ENCODE measurements at regions of chr11 and their contacts with region 1.

Region 1: DNA sequence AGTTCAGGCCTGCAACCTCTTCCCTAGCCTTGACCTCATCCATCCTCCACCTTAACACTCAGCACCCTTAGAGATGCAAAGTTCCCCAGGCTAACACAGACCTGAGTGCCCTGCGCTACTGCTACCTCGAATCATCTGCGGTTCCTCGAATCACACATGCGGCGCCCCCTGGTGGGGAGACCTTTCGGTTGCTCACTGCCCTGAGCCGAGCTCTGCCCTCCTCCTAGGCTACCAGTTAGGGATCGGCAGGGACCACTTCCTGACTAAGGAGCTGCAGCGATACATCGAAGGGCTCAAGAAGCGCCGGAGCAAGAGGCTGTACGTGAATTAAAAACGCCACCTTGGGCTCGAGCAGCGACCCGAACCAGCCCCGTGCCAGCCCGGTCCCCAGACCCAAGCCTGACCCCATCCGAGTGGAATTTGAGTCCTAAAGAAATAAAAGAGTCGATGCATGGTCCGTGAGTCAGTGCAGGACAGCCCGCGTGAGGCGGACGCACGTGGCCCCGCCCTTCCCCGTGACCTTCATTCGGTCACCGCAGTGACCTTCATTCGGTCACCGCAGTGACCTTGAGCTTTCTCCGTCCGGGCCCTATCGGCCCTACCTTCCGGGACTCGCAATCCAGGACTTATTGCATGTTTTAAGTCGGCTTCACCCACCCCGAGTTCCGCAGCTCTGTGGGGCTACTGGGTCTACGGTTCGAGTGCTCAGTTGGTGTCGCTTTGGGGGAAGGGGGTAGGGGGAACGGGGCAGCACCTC is 830 bp upstream of the ESRRA start:
- DNase-seq: peak; percentile 88
- H3K4me3 ChIP-seq: peak overlapping the region; percentile 67 to 82
- H3K27ac ChIP-seq: peak overlapping the region; percentile 83 to 96
- H3K4me1 ChIP-seq: peaks cover 5 to 18% of the 10 kb centered on the region in 2 experiments; a peak in 2 of 4 replicates
- H3K27me3 ChIP-seq: no peaks in the 10 kb centered on the region
- CTCF ChIP-seq: peak; percentile 96
- EP300 ChIP-seq: no peak
- RAD21 ChIP-seq: peak; percentile 64

Region 2: GRCh38 chr11:64225612-64226506 is 78.6 kb before region 1 on chr11 and contains the starts of genes NUDT22 and TRPT1:
- CTCF ChIA-PET with region 1: interaction called, 11 read pairs
- POLR2A ChIA-PET with region 1: no interaction called
- DNase-seq: peak; percentile 97
- H3K4me3 ChIP-seq: peak within 1 kb of the TSS; percentile 88 to 97
- H3K27ac ChIP-seq: peak within 1 kb of the TSS; percentile 47 to 88
- H3K4me1 ChIP-seq: peaks cover 9 to 34% of the 10 kb centered on the region in 2 experiments; a peak in 2 of 4 replicates
- H3K27me3 ChIP-seq: no peaks in the 10 kb centered on the region
- CTCF ChIP-seq: peak; percentile 16
- EP300 ChIP-seq: no peak
- RAD21 ChIP-seq: no peak
- polyA plus RNA-seq, gene NUDT22: 72.7 and 74.0 TPM in 2 replicates
- polyA plus RNA-seq, gene TRPT1: 61.5 and 62.4 TPM in 2 replicates

Region 3: DNA sequence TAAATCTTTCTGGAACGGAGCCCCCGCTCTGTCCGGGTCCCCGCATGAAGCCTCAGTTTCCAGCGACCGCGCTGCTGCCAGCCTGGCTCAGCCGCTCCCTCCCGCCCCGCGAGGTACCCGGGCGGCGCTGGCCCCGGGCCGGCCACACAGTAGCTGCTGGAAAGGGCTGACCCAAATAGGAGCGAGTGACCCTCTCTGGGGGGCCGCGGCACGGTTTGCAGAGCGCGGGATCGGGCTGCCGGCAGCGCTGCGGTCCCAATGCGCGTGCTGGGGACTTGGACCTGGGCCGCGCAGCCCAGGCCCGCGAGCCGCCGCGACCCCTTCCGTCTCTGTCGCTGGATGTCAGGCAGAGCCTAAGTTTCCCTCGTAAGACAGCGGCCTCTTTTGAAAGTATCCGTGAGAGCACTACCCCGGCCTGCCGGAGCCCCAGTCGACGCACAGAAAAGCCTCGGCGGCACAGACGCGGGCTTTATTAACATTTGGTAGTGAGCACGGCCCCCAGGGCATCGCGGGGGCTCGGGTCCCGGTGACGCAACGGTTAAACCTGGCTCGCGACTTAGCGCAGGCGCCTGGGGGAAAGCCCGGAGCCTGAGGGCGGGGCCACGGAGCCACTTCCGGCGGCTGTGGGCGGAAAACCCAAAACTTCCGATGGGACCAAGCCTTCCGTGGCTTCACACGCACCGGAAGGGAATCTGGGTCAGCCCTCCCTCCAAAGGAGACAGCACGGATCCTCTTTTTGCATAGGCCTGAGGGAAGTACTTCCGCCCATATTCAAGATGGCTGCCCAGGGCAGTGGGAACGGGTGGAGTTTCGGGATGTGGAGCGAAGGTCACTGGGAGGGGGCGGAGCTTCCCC is 34.9 kb before region 1 on chr11:
- CTCF ChIA-PET with region 1: interaction called, 139 read pairs
- POLR2A ChIA-PET with region 1: interaction called, 54 read pairs
- DNase-seq: peak; percentile 86
- H3K4me3 ChIP-seq: peak overlapping the region; percentile 60 to 76
- H3K27ac ChIP-seq: peak overlapping the region; percentile 97 to 99
- H3K4me1 ChIP-seq: peaks cover 12 to 42% of the 10 kb centered on the region in 2 experiments; a peak in 2 of 4 replicates
- H3K27me3 ChIP-seq: no peaks in the 10 kb centered on the region
- CTCF ChIP-seq: 0 out of 2 replicates have a peak, but pooled peaks have one; percentile 14
- EP300 ChIP-seq: no peak; a peak in 1 of 4 replicates
- RAD21 ChIP-seq: peak; percentile 44

Region 4: GRCh38 chr11:64284048-64284961 is 20.2 kb before region 1 on chr11 and contains the start of gene BAD:
- CTCF ChIA-PET with region 1: interaction called, 196 read pairs
- POLR2A ChIA-PET with region 1: interaction called, 6 read pairs
- DNase-seq: peak; percentile 99
- H3K4me3 ChIP-seq: peak within 1 kb of the TSS; percentile 60 to 95
- H3K27ac ChIP-seq: peak within 1 kb of the TSS; percentile 87 to 96
- H3K4me1 ChIP-seq: peaks cover 8 to 21% of the 10 kb centered on the region in 2 experiments; a peak in 2 of 4 replicates
- H3K27me3 ChIP-seq: no peaks in the 10 kb centered on the region
- CTCF ChIP-seq: no peak
- EP300 ChIP-seq: no peak
- RAD21 ChIP-seq: no peak
- polyA plus RNA-seq, gene BAD: 75.6 and 80.9 TPM in 2 replicates

Region 5: DNA sequence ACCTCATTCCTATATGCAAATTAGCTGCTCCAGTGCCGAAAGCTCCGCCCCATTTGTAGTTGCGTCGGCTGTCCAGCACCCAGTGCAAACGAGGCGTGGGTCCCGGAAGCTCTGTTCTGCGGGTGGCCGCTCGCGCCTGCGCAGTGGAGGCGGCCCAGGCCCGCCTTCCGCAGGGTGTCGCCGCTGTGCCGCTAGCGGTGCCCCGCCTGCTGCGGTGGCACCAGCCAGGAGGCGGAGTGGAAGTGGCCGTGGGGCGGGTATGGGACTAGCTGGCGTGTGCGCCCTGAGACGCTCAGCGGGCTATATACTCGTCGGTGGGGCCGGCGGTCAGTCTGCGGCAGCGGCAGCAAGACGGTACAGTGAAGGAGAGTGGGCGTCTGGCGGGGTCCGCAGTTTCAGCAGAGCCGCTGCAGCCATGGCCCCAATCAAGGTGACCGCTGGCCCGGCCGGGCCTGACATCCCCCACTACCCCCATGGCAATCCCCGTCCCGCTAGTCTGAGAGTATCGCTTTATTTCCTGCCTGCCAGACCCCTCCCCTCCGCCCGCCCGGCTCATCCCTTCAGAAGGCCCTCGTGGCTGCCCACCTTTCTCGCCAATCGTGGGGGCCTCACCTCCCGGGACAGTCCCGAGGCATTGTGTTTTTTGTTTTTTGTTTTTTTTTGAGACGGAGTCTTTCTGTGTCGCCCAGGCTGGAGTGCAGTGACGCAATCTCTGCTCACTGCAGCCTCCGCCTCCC is 13.6 kb after region 1 on chr11 and contains the start of gene PRDX5:
- CTCF ChIA-PET with region 1: interaction called, 27 read pairs
- POLR2A ChIA-PET with region 1: interaction called, 18 read pairs
- DNase-seq: peak; percentile 97
- H3K4me3 ChIP-seq: peak within 1 kb of the TSS; percentile 70 to 98
- H3K27ac ChIP-seq: peak within 1 kb of the TSS; percentile 97 to 100
- H3K4me1 ChIP-seq: peaks cover 0 to 15% of the 10 kb centered on the region in 2 experiments; a peak in 2 of 4 replicates
- H3K27me3 ChIP-seq: no peaks in the 10 kb centered on the region
- CTCF ChIP-seq: peak; percentile 33; the same call in 1 of the 2 replicates
- EP300 ChIP-seq: 0 out of 4 replicates have a peak, but pooled peaks of 1 of the 2 experiments have one; percentile 4
- RAD21 ChIP-seq: peak; percentile 55
- polyA plus RNA-seq, gene PRDX5: 875 and 1,000 TPM in 2 replicates

Region 6: DNA sequence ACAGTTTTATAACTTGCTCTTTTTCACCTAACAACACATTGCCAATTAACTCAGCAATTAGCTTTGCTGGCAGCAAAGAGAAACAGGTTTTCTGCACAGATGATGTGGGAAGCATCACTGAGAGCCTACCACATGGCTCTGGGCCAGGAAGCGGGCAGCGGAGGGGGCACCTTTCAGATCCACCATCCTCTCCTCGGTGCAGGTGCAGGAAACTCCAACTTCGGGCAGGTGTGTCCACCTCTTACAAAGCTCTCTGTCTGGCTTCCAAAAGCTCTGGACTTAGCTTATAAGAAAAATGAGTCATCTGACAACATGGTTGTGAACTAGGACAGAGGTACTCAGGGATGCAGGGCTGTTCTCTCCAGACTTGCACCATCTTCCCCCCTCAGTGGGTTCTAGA is 131.5 kb after region 1 on chr11:
- CTCF ChIA-PET with region 1: no interaction called
- POLR2A ChIA-PET with region 1: no interaction called
- DNase-seq: no peak
- H3K4me3 ChIP-seq: no peak overlapping the region
- H3K27ac ChIP-seq: no peak overlapping the region
- H3K4me1 ChIP-seq: no peaks in the 10 kb centered on the region; a peak in 1 of 4 replicates
- H3K27me3 ChIP-seq: peaks cover 5% of the 10 kb centered on the region; the same call in 1 of the 2 replicates
- CTCF ChIP-seq: no peak
- EP300 ChIP-seq: no peak
- RAD21 ChIP-seq: no peak

Measured in SK-N-SH (cell line).